ENCODE measurements at regions of chr11 and their contacts with region 1.

Region 1: GRCh38 chr11:31337806-31338205 is 31.7 kb downstream of the DCDC1 start:
- DNase-seq: no peak

Region 2: GRCh38 chr11:31118566-31118965 is 219.2 kb before region 1 on chr11:
- intact Hi-C with region 1: loop called in 1 of 2 experiments (anchors 5 kb)
- DNase-seq: no peak

Region 3: DNA sequence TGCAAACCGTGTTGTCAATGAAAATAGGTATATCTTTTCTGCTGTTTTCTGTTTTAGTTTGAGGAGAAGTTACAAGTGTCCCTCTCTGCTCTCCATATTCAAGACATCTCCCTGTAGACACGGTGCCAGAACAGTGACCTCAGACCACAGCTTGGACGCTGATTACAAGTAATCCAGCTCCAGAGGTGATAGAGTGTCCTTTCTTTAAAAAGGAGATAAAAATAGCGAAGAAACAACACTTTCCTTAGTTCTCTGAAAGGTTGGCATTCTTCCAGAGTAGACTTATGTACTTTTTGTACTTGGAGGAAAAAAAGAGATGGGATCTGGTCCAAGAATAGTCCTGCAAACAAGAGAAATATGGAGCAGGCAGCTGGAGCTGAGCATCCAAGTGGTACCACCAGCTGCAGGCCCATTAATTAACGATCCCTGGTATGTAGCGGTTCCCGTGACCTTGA is 1140.5 kb after region 1 on chr11:
- intact Hi-C with region 1: no loop called
- DNase-seq: no peak